K562 (cell line): ENCODE measurements at regions of chr13 and their contacts with region 1.

Region 1: DNA sequence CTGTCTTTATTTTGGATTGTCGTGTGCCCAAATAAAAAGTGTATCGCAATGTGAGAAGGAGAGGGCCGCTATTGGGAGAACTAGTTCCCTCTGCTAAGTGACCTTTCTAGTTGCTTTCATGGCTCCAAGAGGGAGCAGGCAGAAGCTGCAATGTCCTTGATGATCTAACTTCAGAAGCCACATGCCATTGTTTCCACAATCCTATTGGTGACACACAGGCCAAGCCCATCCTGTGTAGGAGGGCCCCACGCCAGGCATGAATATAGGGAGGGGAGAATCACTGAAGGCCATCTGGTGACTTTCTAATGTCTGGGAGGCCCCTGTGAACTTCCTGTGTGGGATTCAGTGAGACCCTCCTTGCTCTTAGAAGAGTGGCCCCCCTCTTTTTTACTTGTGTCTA is 47.8 kb upstream of the KPNA3 start:
- DNase-seq: peak in 1 of 4 experiments; percentile 36
- ATAC-seq: peak; percentile 79
- H3K4me3 ChIP-seq: no peak overlapping the region
- H3K27ac ChIP-seq: no peak overlapping the region
- H3K4me1 ChIP-seq: peaks cover 3 to 4% of the 10 kb centered on the region in 2 experiments; a peak in 3 of 5 replicates
- H3K27me3 ChIP-seq: no peaks in the 10 kb centered on the region
- CTCF ChIP-seq: no peak
- EP300 ChIP-seq: no peak
- POLR2A ChIP-seq: no peak
- RAD21 ChIP-seq: no peak

Region 2: DNA sequence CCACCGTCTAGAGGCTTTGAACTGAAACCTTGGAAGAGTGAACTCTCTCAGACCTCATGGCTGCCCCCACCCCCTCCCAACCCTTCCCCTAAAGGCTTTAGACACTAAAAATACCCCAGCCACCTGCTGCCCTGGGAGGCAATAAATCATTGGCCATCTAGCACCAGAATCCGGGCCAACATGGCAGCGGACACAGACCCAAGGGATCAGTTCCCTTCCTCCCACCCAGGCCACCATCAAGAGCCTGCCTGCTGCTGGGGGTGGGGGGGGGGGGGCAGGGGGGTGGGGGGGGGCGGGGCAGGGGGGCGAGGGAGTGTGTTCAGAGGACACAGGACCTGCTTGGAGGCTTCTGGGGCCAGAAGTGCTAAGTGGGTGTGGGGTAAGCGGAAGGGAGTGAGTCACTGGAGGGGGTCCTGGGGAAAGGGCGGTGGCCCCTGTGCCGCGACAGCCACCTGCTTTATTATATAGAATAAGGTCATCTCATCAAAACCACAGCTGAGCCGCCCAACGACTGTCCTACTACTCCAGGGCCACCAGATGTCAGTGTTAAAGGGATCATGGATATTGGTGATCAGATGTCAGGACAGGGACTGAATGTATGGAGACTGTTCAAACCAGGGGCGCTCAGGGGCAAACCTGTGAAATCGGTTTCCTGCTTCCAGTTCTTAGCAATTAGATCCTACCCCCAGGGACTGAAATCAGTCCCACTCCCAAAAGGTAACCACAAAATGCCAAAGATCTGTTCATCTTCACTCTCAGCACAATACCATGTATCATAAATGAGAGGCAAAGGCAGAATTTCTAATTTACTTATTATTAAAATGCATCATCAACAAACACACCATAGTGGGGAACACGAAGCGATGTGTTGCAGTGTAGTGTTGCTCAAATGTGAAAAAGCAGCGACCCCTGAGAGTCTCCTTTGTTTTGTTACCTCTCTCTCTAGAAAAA is 187.6 kb before region 1 on chr13:
- CTCF ChIA-PET with region 1: no interaction called
- POLR2A ChIA-PET with region 1: no interaction called
- in situ Hi-C with region 1: loop called (anchors 5 kb)
- intact Hi-C with region 1: no loop called
- DNase-seq: peak; percentile 48 to 64 (median 55)
- ATAC-seq: peak; percentile 95
- H3K4me3 ChIP-seq: no peak overlapping the region
- H3K27ac ChIP-seq: no peak overlapping the region
- H3K4me1 ChIP-seq: no peaks in the 10 kb centered on the region
- H3K27me3 ChIP-seq: no peaks in the 10 kb centered on the region
- CTCF ChIP-seq: peak; percentile 58 to 66 (median 64)
- EP300 ChIP-seq: no peak
- POLR2A ChIP-seq: no peak
- RAD21 ChIP-seq: peak; percentile 32 to 67

Region 3: GRCh38 chr13:50801087-50801931 is 961.0 kb after region 1 on chr13:
- CTCF ChIA-PET with region 1: no interaction called
- POLR2A ChIA-PET with region 1: no interaction called
- in situ Hi-C with region 1: no loop called
- intact Hi-C with region 1: no loop called
- DNase-seq: peak; percentile 17 to 71 (median 32)
- ATAC-seq: peak; percentile 94
- H3K4me3 ChIP-seq: no peak overlapping the region
- H3K27ac ChIP-seq: no peak overlapping the region
- H3K4me1 ChIP-seq: no peaks in the 10 kb centered on the region
- H3K27me3 ChIP-seq: no peaks in the 10 kb centered on the region
- CTCF ChIP-seq: peak; percentile 66 to 74 (median 70)
- EP300 ChIP-seq: no peak
- POLR2A ChIP-seq: no peak
- RAD21 ChIP-seq: peak; percentile 85 to 87